ENCODE measurements at regions of chr12 and their contacts with region 1.

Region 1: GRCh38 chr12:96399919-96400797 is at the start of gene CDK17:
- DNase-seq: peak; percentile 90
- H3K4me3 Mint-ChIP-seq: peak within 1 kb of the TSS; percentile 81
- H3K27ac Mint-ChIP-seq: peak within 1 kb of the TSS; percentile 94
- H3K4me1 Mint-ChIP-seq: peaks cover 35% of the 10 kb centered on the region
- H3K27me3 Mint-ChIP-seq: no peaks in the 10 kb centered on the region
- total RNA-seq, gene CDK17: 41.4 to 45.8 TPM

Region 2: DNA sequence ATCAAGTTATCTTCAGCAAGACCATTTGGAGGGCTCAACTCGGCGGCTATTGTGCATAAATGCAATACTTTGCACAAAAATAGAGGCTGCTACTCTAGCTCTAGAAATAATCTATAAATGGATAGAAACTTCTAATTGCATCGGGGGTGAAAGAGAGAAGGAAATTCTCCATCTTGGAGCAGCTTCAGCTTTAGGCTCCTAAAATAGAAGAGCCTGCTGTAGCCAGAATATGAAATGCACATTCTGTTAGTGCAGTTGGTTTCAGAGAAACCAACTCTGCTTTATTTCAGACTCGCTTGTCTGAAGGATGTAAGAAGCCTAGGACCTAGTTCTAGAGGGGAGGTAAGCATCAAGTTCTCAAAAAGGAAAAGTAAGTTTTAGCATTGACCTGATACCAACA is 503.3 kb before region 1 on chr12:
- CTCF ChIA-PET with region 1: no interaction called
- intact Hi-C with region 1: no loop called
- DNase-seq: no peak
- H3K4me3 Mint-ChIP-seq: no peak overlapping the region
- H3K27ac Mint-ChIP-seq: no peak overlapping the region
- H3K4me1 Mint-ChIP-seq: no peaks in the 10 kb centered on the region
- H3K27me3 Mint-ChIP-seq: peaks cover 3% of the 10 kb centered on the region

Region 3: DNA sequence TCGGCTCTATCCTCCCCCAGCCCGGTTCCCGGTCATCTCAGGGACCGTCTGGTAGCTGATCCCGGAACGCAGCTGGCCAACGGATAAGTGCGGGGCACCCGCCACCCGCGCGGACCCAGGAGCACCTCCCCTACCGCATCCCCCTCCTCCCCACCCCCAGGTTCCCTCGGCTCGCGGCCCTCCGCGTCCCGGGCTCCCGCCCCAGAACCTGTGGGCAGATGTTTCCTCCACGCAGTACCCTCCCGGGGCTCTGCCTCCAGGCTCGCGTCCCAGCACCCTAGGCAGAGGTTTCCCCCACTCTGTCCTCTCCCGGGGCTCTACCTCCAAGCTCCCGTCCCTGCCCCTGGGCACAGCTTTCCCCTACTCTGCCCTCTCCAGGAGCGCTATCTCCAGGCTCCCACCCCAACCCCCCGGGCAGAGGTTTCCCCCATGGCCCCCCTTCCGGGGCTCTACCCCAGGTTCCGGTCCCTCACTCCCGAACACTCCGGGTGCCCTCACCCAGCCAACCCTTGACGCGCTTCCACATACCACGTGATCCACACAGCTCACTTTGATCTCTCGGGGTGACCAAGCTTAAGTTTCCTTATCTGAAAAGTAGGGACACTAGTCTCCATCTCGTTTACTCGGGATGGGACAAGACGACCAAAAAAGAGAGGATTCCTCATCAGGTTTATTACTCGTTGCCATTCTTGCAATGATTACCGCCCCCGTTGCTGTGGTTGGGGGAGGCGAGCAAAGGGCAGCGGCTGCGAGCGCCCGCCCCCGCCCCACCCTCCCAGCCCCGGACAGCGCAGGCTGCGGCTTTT is 457.4 kb before region 1 on chr12 and contains the start of gene CCDC38:
- CTCF ChIA-PET with region 1: no interaction called
- intact Hi-C with region 1: loop called (anchors 10 kb)
- DNase-seq: peak; percentile 91
- H3K4me3 Mint-ChIP-seq: peak within 1 kb of the TSS; percentile 86
- H3K27ac Mint-ChIP-seq: peak within 1 kb of the TSS; percentile 80
- H3K4me1 Mint-ChIP-seq: peaks cover 4% of the 10 kb centered on the region
- H3K27me3 Mint-ChIP-seq: no peaks in the 10 kb centered on the region
- total RNA-seq, gene CCDC38: 0.49 TPM in 1 of 2 experiments, not detected in the other

Region 4: DNA sequence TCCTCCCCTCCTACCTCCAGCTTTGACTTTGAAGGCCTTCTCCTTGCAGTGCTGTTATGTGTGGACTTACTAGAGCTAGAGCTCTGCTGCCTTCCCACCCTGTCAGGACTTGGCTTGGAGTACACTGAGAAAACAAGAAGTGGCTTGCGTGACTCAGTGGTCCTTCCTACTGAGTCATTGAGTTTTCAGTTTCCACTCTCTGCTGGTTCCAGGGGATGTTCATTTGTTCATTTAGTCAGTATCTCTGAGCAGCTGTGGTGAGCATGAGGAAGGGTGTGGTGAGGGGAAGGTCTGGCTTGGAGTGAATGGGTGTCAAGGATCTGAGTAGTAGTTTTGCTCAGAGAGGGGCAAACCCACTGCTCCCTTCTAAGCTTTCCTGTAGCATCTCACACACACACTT is 223.1 kb before region 1 on chr12:
- CTCF ChIA-PET with region 1: no interaction called
- intact Hi-C with region 1: loop called (anchors 1 kb)
- DNase-seq: peak; percentile 91
- H3K4me3 Mint-ChIP-seq: no peak overlapping the region
- H3K27ac Mint-ChIP-seq: peak overlapping the region; percentile 82
- H3K4me1 Mint-ChIP-seq: peaks cover 17% of the 10 kb centered on the region
- H3K27me3 Mint-ChIP-seq: no peaks in the 10 kb centered on the region

Region 5: GRCh38 chr12:96294831-96295230 is 105.3 kb before region 1 on chr12:
- CTCF ChIA-PET with region 1: no interaction called
- intact Hi-C with region 1: loop called (anchors 1 kb)
- DNase-seq: no peak
- H3K4me3 Mint-ChIP-seq: no peak overlapping the region
- H3K27ac Mint-ChIP-seq: no peak overlapping the region
- H3K4me1 Mint-ChIP-seq: peaks cover 26% of the 10 kb centered on the region
- H3K27me3 Mint-ChIP-seq: no peaks in the 10 kb centered on the region

Region 6: GRCh38 chr12:96359328-96359727 is 40.8 kb before region 1 on chr12:
- CTCF ChIA-PET with region 1: no interaction called
- intact Hi-C with region 1: no loop called
- DNase-seq: no peak
- H3K4me3 Mint-ChIP-seq: no peak overlapping the region
- H3K27ac Mint-ChIP-seq: no peak overlapping the region
- H3K4me1 Mint-ChIP-seq: peaks cover 75% of the 10 kb centered on the region
- H3K27me3 Mint-ChIP-seq: no peaks in the 10 kb centered on the region

Region 7: DNA sequence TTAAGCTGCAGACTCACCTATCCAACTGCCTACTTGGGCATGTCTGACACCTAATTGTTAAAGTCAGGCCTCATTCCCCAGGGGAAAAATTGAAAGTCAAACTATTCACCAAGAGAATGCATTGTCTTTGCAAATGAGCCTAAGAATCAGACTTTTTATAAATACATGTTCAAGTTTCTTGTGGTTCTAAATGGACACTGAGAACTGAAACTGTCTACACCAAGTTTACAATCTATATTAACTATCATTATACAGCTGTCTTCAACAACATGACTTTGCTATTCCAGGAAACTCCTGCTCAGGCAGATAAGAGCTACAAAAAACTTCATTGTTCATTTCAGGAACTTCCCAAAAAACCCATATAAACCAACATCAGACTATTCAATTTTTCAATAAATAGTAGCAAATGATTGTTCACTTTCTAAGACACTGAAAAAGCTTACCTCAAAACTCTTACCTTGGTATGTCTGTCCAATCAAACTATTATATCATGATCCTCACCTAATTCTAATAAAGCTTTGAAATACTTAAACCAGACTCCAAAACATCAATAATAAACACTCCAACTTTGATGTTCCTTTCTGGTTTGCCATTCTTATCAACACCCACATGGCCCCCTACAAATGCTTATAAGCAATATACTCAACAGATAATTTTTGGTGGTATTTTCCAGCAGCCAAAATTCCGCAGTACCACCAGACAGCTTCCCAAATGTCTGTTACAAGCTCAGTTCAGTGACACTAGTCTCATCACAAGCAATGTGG is 24.1 kb before region 1 on chr12:
- CTCF ChIA-PET with region 1: interaction called, 9 read pairs
- intact Hi-C with region 1: loop called (anchors 1 kb)
- DNase-seq: no peak
- H3K4me3 Mint-ChIP-seq: no peak overlapping the region
- H3K27ac Mint-ChIP-seq: peak overlapping the region; percentile 96
- H3K4me1 Mint-ChIP-seq: peaks cover 82% of the 10 kb centered on the region
- H3K27me3 Mint-ChIP-seq: no peaks in the 10 kb centered on the region

Region 8: GRCh38 chr12:96456265-96456974 is 56.3 kb after region 1 on chr12:
- CTCF ChIA-PET with region 1: interaction called, 5 read pairs
- intact Hi-C with region 1: loop called (anchors 2 kb)
- DNase-seq: no peak
- H3K4me3 Mint-ChIP-seq: no peak overlapping the region
- H3K27ac Mint-ChIP-seq: no peak overlapping the region
- H3K4me1 Mint-ChIP-seq: peaks cover 5% of the 10 kb centered on the region
- H3K27me3 Mint-ChIP-seq: no peaks in the 10 kb centered on the region

Region 9: GRCh38 chr12:96571101-96571862 is 171.1 kb after region 1 on chr12:
- CTCF ChIA-PET with region 1: no interaction called
- intact Hi-C with region 1: loop called (anchors 1 kb)
- DNase-seq: peak; percentile 58
- H3K4me3 Mint-ChIP-seq: peak overlapping the region; percentile 27
- H3K27ac Mint-ChIP-seq: peak overlapping the region; percentile 15
- H3K4me1 Mint-ChIP-seq: peaks cover 27% of the 10 kb centered on the region
- H3K27me3 Mint-ChIP-seq: peaks cover 7% of the 10 kb centered on the region

Region 10: GRCh38 chr12:96786791-96787190 is 386.6 kb after region 1 on chr12:
- CTCF ChIA-PET with region 1: no interaction called
- intact Hi-C with region 1: no loop called
- DNase-seq: no peak
- H3K4me3 Mint-ChIP-seq: no peak overlapping the region
- H3K27ac Mint-ChIP-seq: no peak overlapping the region
- H3K4me1 Mint-ChIP-seq: no peaks in the 10 kb centered on the region
- H3K27me3 Mint-ChIP-seq: peaks cover 5% of the 10 kb centered on the region

Measured in activated naive CD4-positive, alpha-beta T cell treated with anti-CD3 and anti-CD28 coated beads for 36 hours (primary cell).